HepG2 (cell line): ENCODE measurements at regions of chr2 and their contacts with region 1.

Region 1: DNA sequence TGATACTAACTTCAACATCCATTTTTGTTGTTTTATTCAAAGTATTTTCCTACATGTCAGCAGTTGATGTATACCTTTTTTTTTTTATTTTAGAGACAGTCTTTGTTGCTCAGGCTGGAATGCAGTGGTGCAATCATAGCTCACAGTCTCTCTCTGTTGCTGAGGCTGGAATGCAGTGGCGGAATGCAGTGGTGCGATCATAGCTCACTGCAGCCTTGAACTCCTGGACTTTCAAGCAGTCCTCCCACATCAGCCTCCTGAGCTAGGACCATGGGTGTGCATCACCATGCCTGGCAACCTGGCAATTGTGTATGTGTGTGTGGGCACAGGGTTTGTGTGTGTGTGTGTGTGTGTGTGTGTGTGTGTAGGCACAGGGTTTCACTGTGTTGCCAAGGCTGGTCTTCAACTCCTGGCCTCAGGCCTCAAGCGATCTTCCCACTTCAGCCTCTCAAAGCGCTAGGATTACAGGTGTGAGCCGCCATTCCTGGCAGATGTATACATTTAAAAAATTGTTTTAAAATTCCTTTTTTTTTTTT is 24.8 kb downstream of the SANBR start:
- DNase-seq: peak; percentile 95
- ATAC-seq: peak; percentile 100
- H3K4me3 ChIP-seq: no peak overlapping the region
- H3K27ac ChIP-seq: peak overlapping the region; percentile 70
- H3K4me1 ChIP-seq: peaks cover 17% of the 10 kb centered on the region
- H3K27me3 ChIP-seq: no peaks in the 10 kb centered on the region
- CTCF ChIP-seq: peak; percentile 16; the same call in 1 of the 2 replicates
- EP300 ChIP-seq: peak; percentile 87 to 94; a peak in 3 of 4 replicates
- POLR2A ChIP-seq: no peak
- RAD21 ChIP-seq: peak; percentile 50; the same call in 1 of the 2 replicates

Region 2: DNA sequence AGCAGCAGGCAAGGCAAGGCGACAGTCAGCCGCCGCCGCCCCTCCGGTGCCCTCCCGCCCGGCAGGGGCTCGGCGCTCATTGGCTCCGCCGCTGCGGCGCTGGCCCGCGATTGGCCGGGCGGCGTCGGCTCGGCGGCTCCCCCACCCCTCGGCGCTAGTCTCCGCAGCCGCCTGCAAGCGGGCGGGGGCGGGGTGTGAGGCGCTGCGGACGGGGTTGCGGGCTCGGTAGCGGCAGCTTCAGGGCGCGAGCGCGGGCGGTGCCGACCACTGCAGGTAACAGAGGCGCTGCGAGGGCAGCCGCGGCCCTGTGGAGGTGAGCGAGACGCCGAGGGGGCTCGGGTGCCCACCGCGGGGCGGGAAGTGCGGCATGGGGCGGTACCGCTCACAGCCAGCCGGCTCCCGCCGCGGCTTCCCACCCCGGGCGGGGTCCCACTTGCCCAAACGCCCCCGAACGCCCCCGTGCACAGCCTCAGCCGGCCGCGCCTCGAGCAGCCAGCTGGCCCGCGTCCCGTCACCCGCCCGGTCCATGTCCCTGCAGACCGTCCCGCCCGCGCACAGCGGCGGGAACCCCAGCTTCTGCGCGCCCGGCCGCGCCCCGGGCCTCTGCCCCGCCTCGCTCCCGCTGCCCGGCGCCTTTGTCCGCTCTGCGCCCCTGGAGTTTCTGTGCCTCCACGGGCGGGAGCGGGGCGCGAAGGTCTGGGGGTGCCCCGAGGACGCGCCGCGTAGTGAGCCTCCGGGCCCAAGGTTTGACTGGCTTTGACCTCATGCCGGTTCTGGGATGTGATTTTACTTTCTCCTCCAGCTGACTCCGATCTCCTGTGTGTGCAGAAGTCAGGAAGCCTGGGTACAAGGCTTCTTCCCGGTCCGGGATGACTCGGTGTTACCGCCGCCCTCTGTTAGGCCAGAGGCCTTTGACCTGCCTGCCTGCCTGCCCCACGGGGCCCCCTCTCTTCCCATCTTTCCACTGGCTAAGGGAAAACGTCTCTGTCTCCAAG is 24.4 kb before region 1 on chr2 and contains the start of gene SANBR:
- CTCF ChIA-PET with region 1: no interaction called
- POLR2A ChIA-PET with region 1: interaction called, 5 read pairs
- in situ Hi-C with region 1: no loop called
- intact Hi-C with region 1: loop called (anchors 1 kb)
- DNase-seq: peak; percentile 78
- ATAC-seq: peak; percentile 97
- H3K4me3 ChIP-seq: peak within 1 kb of the TSS; percentile 86 to 97 (median 94)
- H3K27ac ChIP-seq: peak within 1 kb of the TSS; percentile 90
- H3K4me1 ChIP-seq: peaks cover 28% of the 10 kb centered on the region
- H3K27me3 ChIP-seq: no peaks in the 10 kb centered on the region
- CTCF ChIP-seq: no peak; the same call in 1 of the 2 replicates
- EP300 ChIP-seq: no peak
- POLR2A ChIP-seq: peak; percentile 49 to 84
- RAD21 ChIP-seq: peak; percentile 53
- total RNA-seq, gene SANBR: 20.9 and 22.9 TPM in 2 replicates

Region 3: GRCh38 chr2:61220768-61221167 is 130.3 kb after region 1 on chr2:
- CTCF ChIA-PET with region 1: no interaction called
- POLR2A ChIA-PET with region 1: no interaction called
- in situ Hi-C with region 1: no loop called
- intact Hi-C with region 1: no loop called
- DNase-seq: no peak
- ATAC-seq: no peak
- H3K4me3 ChIP-seq: no peak overlapping the region
- H3K27ac ChIP-seq: no peak overlapping the region
- H3K4me1 ChIP-seq: no peaks in the 10 kb centered on the region
- H3K27me3 ChIP-seq: no peaks in the 10 kb centered on the region
- CTCF ChIP-seq: no peak
- EP300 ChIP-seq: no peak
- POLR2A ChIP-seq: no peak
- RAD21 ChIP-seq: no peak